B cell (primary cell): ENCODE measurements at regions of chr3 and their contacts with region 1.

Region 1: GRCh38 chr3:131794766-131795388 is 239.9 kb downstream of the CPNE4 start:
- DNase-seq: peak; percentile 37
- ATAC-seq: peak; percentile 39
- H3K4me3 ChIP-seq: no peak overlapping the region
- H3K4me3 Mint-ChIP-seq: no peak overlapping the region
- H3K27ac ChIP-seq: no peak overlapping the region
- H3K27ac Mint-ChIP-seq: no peak overlapping the region
- H3K4me1 ChIP-seq: peaks cover 7 to 22% of the 10 kb centered on the region in 2 donors
- H3K4me1 Mint-ChIP-seq: peaks cover 22% of the 10 kb centered on the region
- H3K27me3 ChIP-seq: no peaks in the 10 kb centered on the region
- H3K27me3 Mint-ChIP-seq: peaks cover 25% of the 10 kb centered on the region
- CTCF ChIP-seq: peak; percentile 73

Region 2: DNA sequence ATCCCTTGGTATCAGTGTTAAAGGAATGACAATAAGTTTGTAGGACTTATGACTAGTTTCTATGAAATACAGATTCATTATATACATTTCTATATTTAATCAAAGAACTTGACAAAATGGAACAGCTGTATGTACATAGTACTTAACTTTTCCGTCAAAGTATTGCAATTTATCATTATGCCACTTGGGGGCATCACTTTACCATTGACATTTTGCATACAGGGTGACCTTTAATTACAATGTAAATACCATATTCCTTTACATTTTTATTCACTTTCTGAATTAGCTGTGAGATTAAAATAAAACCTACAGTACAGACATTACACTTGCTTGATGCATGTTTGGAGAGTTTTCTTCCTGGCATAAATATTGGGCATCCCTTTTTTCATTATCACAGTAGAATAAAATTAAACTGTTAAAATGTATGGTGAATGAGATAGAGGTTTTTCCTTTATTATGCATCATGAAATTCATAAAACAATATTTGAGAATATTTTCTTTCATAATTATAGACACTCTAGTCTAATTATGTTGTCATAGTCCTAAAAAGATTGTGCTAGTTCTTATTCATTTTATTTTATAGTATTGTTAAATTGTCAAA is 761.3 kb before region 1 on chr3:
- CTCF ChIA-PET with region 1: no interaction called
- POLR2A ChIA-PET with region 1: no interaction called
- intact Hi-C with region 1: loop called (anchors 10 kb)
- DNase-seq: peak; percentile 62
- ATAC-seq: peak; percentile 54
- H3K4me3 ChIP-seq: no peak overlapping the region
- H3K4me3 Mint-ChIP-seq: no peak overlapping the region
- H3K27ac ChIP-seq: no peak overlapping the region
- H3K27ac Mint-ChIP-seq: no peak overlapping the region
- H3K4me1 ChIP-seq: no peaks in the 10 kb centered on the region
- H3K4me1 Mint-ChIP-seq: no peaks in the 10 kb centered on the region
- H3K27me3 ChIP-seq: no peaks in the 10 kb centered on the region
- H3K27me3 Mint-ChIP-seq: no peaks in the 10 kb centered on the region
- CTCF ChIP-seq: peak; percentile 87

Region 3: GRCh38 chr3:131782751-131783150 is 12.1 kb before region 1 on chr3:
- CTCF ChIA-PET with region 1: interaction called, 13 read pairs
- POLR2A ChIA-PET with region 1: no interaction called
- intact Hi-C with region 1: no loop called
- DNase-seq: no peak
- ATAC-seq: no peak
- H3K4me3 ChIP-seq: no peak overlapping the region
- H3K4me3 Mint-ChIP-seq: no peak overlapping the region
- H3K27ac ChIP-seq: no peak overlapping the region
- H3K27ac Mint-ChIP-seq: no peak overlapping the region
- H3K4me1 ChIP-seq: no peaks in the 10 kb centered on the region
- H3K4me1 Mint-ChIP-seq: no peaks in the 10 kb centered on the region
- H3K27me3 ChIP-seq: no peaks in the 10 kb centered on the region
- H3K27me3 Mint-ChIP-seq: peaks cover 5% of the 10 kb centered on the region
- CTCF ChIP-seq: no peak